Left lung (tissue), 14 donors: ENCODE measurements at regions of chr1 and their contacts with region 1.

Region 1: GRCh38 chr1:17236779-17237560 is 11.9 kb upstream of the PADI3 start:
- DNase-seq: peak; percentile 58 to 92 (median 84)
- ATAC-seq: peak; percentile 86
- H3K4me3 ChIP-seq: no peak overlapping the region
- H3K27ac ChIP-seq: no peak overlapping the region
- H3K4me1 ChIP-seq: no peaks in the 10 kb centered on the region
- H3K27me3 ChIP-seq: peaks cover 0 to 38% of the 10 kb centered on the region in 2 donors
- CTCF ChIP-seq: peak; percentile 89 to 94

Region 2: GRCh38 chr1:17059739-17060460 is 177.1 kb before region 1 on chr1:
- intact Hi-C with region 1: loop called in 1 of 2 experiments (anchors 5 kb)
- DNase-seq: peak in 3 of 4 donors; percentile 62 to 90 (median 77)
- ATAC-seq: peak; percentile 95
- H3K4me3 ChIP-seq: no peak overlapping the region
- H3K27ac ChIP-seq: peak overlapping the region in 1 of 2 donors; percentile 73
- H3K4me1 ChIP-seq: peaks cover 0 to 40% of the 10 kb centered on the region in 2 donors
- H3K27me3 ChIP-seq: no peaks in the 10 kb centered on the region
- CTCF ChIP-seq: peak; percentile 57 to 74

Region 3: GRCh38 chr1:17125756-17126237 is 111.2 kb before region 1 on chr1:
- intact Hi-C with region 1: loop called in 1 of 2 experiments (anchors 2 kb)
- DNase-seq: peak; percentile 76 to 97 (median 90)
- ATAC-seq: peak; percentile 92
- H3K4me3 ChIP-seq: no peak overlapping the region
- H3K27ac ChIP-seq: no peak overlapping the region
- H3K4me1 ChIP-seq: peaks cover 0 to 53% of the 10 kb centered on the region in 2 donors
- H3K27me3 ChIP-seq: peaks cover 0 to 8% of the 10 kb centered on the region in 2 donors
- CTCF ChIP-seq: peak; percentile 93 to 96